GM13977 (cell line): ENCODE measurements at regions of chr3 and their contacts with region 1.

Region 1: DNA sequence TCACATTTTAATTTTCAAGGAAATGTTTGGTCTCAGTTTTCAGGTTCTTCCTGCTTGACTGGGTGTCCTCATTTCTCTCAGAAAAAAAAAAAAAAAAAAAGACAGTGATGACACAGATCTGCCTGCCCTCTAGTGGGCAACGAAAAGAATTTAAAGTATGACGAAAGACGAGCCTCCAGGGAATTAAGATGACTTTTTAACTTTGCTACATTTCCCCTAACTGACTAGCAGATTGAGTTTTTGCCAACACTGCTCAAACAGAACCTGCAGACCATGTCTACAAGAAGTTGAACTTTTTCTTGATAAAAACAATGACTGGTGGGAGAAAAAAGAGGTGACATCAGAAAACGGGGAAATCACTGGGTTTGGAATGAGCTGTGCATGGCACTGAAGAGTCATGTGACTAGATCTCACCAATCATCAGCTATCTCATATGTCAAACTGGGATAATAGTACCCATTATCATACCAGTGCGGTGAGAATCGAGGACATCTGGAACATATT is 40.8 kb downstream of the EOMES start:
- DNase-seq: peak; percentile 60
- CTCF ChIP-seq: peak; percentile 61

Region 2: DNA sequence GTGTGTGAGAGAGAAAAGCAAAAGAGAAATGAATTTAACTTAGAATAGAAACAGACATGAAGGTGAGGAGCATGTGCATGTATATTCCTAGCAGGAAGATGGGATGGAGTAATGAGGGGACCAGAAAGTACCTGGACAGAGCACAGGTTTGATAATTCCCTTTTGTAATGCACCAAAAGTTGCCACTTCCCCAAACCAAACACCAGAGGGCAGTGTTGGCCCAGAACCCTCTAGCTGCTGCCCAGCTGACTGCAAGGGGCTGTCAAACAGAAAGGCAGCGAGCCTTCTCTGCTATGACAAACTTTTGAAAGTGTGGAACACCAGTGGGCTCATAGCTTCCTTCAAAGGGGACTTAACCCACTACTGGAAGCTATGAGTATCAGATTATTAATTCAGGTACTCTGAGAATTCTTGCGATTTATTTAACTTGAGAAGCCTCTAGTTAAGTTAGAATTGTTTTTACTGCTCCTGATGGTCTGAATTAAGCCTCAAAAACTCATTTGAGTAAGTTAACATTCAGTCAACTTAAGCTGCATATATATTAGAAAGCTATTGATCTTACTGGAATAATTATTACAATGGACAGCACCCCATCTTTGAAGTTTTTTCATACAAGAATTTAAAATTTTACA is 547.0 kb before region 1 on chr3:
- in situ Hi-C with region 1: loop called (anchors 25 kb)
- DNase-seq: peak; percentile 44
- CTCF ChIP-seq: peak; percentile 90

Region 3: GRCh38 chr3:27312044-27312668 is 369.1 kb before region 1 on chr3:
- in situ Hi-C with region 1: loop called (anchors 10 kb)
- DNase-seq: peak; percentile 61
- CTCF ChIP-seq: peak; percentile 72